Activated CD4-positive, alpha-beta T cell treated with anti-CD3 and anti-CD28 coated beads for 36 hours (primary cell): ENCODE measurements at regions of chr1 and their contacts with region 1.

Region 1: GRCh38 chr1:229714964-229715603 is 89.0 kb downstream of the URB2 start:
- DNase-seq: peak; percentile 60
- ATAC-seq: peak; percentile 33
- H3K4me3 Mint-ChIP-seq: no peak overlapping the region
- H3K27ac Mint-ChIP-seq: no peak overlapping the region
- H3K4me1 Mint-ChIP-seq: no peaks in the 10 kb centered on the region
- H3K27me3 Mint-ChIP-seq: peaks cover 3% of the 10 kb centered on the region

Region 2: GRCh38 chr1:230310381-230311163 is 595.5 kb after region 1 on chr1:
- CTCF ChIA-PET with region 1: no interaction called
- POLR2A ChIA-PET with region 1: no interaction called
- intact Hi-C with region 1: loop called in 1 of 2 experiments (anchors 1 kb)
- DNase-seq: peak; percentile 82
- ATAC-seq: peak; percentile 48
- H3K4me3 Mint-ChIP-seq: no peak overlapping the region
- H3K27ac Mint-ChIP-seq: no peak overlapping the region
- H3K4me1 Mint-ChIP-seq: peaks cover 15% of the 10 kb centered on the region
- H3K27me3 Mint-ChIP-seq: peaks cover 4% of the 10 kb centered on the region